Psoas muscle (tissue), 8 donors: ENCODE measurements at regions of chr5 and their contacts with region 1.

Region 1: DNA sequence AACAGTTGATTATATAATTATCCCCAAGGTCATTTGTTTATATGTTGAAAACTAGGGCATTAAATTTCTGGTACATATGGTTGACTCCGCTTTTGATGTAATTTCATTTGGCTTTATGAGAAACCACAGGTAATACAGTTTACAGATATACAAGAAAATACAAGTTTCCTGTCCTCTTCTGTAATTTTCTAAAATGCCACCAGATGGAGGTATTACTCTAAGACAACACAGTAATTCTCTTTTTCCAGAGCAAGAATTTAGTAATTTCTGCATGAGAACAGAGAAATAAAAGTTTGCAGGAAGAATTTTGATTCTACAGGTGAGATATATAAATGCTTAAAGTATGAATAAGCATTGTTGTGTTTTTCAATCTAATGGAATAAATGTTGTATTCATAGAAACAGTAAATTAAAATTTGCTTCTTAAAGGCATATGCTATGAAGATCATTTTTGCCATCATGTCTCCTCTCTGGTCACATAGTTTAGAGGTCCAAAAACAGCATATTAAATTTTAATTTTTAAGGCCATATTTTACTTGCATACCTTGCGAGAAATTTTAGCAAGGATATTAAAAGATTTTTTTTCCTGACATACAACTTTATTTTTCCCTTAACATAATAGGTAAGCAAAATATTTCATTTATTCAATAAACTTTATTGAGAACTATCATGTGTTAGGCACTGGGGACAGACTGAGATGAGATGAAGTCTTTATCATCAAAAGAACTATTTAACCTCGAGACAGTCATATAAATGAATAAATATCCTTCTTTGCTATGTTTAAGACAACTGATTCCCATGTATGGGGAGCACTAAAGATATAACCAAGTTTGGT is 22.7 kb downstream of the CHD1 start:
- DNase-seq: no peak
- ATAC-seq: peak; percentile 44 to 82 (median 54)
- H3K4me3 ChIP-seq: no peak overlapping the region
- H3K27ac ChIP-seq: no peak overlapping the region
- H3K4me1 ChIP-seq: peaks cover 18% of the 10 kb centered on the region
- H3K27me3 ChIP-seq: no peaks in the 10 kb centered on the region
- CTCF ChIP-seq: peak; percentile 80

Region 2: DNA sequence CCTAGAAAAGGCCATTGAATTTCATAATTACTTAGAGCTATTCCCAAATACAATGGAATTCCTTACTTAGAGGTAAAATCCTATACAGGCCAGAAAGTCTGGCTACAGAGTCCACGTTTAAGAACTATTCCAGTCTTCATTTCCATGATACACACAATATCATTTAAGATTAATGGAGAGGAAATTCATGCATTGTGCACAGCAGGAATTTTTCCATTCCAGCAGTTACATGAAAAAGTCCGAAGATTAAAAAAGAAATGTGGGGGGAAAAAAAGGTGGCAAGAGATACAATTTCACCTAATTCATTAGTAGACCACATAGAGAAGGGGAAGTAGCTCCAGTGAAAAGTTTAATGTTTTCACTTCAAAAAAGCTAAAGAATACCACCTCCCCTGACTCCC is 40.4 kb before region 1 on chr5:
- intact Hi-C with region 1: loop called (anchors 5 kb)
- DNase-seq: no peak
- ATAC-seq: no peak
- H3K4me3 ChIP-seq: no peak overlapping the region
- H3K27ac ChIP-seq: no peak overlapping the region
- H3K4me1 ChIP-seq: no peaks in the 10 kb centered on the region
- H3K27me3 ChIP-seq: no peaks in the 10 kb centered on the region
- CTCF ChIP-seq: no peak

Region 3: DNA sequence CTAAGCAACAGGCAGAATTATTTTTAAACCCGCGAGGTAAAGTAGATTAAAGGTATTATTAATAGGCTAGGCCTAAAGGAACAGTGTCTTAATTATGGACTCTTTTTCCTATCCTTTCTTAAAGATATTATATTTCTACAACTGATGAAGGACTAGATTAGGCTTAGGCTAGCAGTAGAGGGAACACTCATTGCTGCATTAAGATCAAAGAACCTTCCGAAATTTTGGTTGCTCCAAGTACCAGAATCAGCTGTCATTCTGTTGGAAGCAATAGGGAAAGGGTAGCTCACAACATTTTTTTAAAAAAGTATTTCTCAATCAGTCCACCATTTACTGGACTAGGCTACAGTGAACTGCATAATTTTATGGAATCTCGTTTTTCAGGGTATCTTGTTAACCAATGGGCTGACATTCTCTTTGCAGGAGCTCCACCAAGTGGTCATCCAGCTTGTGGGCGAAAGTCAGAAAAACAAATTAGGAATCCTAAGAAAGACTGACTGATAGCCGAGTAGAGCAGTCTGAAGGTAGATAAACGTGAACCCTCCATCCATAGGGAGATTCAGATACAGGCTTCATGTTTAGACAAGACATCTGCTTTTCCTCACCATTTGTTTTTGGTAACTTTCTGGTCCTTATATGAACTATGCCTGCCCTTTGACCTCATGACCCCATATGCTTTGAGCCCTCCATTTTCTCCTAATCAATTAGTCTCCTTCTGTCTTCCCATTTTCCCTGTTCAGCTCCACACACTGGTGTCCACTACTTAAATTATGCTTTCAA is 126.3 kb after region 1 on chr5:
- intact Hi-C with region 1: loop called (anchors 2 kb)
- DNase-seq: peak in 1 of 2 donors; percentile 23
- ATAC-seq: peak; percentile 57 to 87 (median 74)
- H3K4me3 ChIP-seq: peak overlapping the region; percentile 47
- H3K27ac ChIP-seq: no peak overlapping the region
- H3K4me1 ChIP-seq: peaks cover 9% of the 10 kb centered on the region
- H3K27me3 ChIP-seq: no peaks in the 10 kb centered on the region
- CTCF ChIP-seq: peak; percentile 80